ENCODE measurements at regions of chr20 and their contacts with region 1.

Region 1: DNA sequence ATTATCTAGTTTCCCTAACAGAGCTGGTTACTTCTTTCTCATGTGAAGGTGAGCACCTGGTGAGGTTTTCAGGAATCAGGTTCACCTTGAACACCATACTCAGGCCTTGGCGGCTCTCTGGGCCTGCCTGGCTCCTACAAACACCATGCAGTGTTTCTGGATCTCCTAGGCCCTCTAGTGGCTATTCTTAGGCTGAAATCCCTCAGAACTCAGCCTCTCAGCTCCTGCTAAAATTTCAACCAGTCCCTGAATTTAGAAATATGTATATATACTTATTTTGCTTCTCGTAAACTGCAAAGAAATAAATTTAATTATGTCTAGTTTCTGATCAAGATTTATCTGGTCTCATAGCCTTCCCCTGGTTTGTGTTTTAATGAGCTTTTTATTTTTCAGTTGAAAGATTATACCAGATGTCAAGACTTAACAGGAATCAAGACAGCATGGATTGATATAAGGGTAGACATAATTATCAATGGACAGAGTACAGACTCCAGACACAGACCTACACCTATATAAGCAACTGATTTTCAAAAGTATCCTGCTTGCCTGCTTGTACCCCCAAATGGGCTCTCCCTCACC is 55.9 kb downstream of the ANKEF1 start:
- DNase-seq: peak; percentile 50
- H3K4me3 ChIP-seq: no peak overlapping the region; a peak in 1 of 4 replicates
- H3K27ac ChIP-seq: no peak overlapping the region
- H3K4me1 ChIP-seq: peaks cover 4 to 11% of the 10 kb centered on the region in 2 experiments; a peak in 1 of 4 replicates
- H3K27me3 ChIP-seq: no peaks in the 10 kb centered on the region
- CTCF ChIP-seq: peak; percentile 90
- EP300 ChIP-seq: no peak
- RAD21 ChIP-seq: peak; percentile 88

Region 2: GRCh38 chr20:9332783-9333479 is 757.7 kb before region 1 on chr20:
- CTCF ChIA-PET with region 1: no interaction called
- POLR2A ChIA-PET with region 1: no interaction called
- DNase-seq: peak; percentile 9
- H3K4me3 ChIP-seq: no peak overlapping the region
- H3K27ac ChIP-seq: no peak overlapping the region
- H3K4me1 ChIP-seq: peaks cover 0 to 7% of the 10 kb centered on the region in 2 experiments; a peak in 1 of 4 replicates
- H3K27me3 ChIP-seq: no peaks in the 10 kb centered on the region
- CTCF ChIP-seq: no peak
- EP300 ChIP-seq: no peak
- RAD21 ChIP-seq: no peak

Region 3: GRCh38 chr20:9949563-9949962 is 141.1 kb before region 1 on chr20:
- CTCF ChIA-PET with region 1: interaction called, 10 read pairs
- POLR2A ChIA-PET with region 1: no interaction called
- DNase-seq: no peak
- H3K4me3 ChIP-seq: no peak overlapping the region
- H3K27ac ChIP-seq: no peak overlapping the region
- H3K4me1 ChIP-seq: no peaks in the 10 kb centered on the region; a peak in 1 of 4 replicates
- H3K27me3 ChIP-seq: no peaks in the 10 kb centered on the region
- CTCF ChIP-seq: no peak
- EP300 ChIP-seq: no peak
- RAD21 ChIP-seq: no peak

Region 4: GRCh38 chr20:10051185-10051584 is 39.5 kb before region 1 on chr20:
- CTCF ChIA-PET with region 1: interaction called, 14 read pairs
- POLR2A ChIA-PET with region 1: no interaction called
- DNase-seq: no peak
- H3K4me3 ChIP-seq: no peak overlapping the region
- H3K27ac ChIP-seq: no peak overlapping the region
- H3K4me1 ChIP-seq: no peaks in the 10 kb centered on the region
- H3K27me3 ChIP-seq: no peaks in the 10 kb centered on the region
- CTCF ChIP-seq: no peak
- EP300 ChIP-seq: no peak
- RAD21 ChIP-seq: no peak

Region 5: DNA sequence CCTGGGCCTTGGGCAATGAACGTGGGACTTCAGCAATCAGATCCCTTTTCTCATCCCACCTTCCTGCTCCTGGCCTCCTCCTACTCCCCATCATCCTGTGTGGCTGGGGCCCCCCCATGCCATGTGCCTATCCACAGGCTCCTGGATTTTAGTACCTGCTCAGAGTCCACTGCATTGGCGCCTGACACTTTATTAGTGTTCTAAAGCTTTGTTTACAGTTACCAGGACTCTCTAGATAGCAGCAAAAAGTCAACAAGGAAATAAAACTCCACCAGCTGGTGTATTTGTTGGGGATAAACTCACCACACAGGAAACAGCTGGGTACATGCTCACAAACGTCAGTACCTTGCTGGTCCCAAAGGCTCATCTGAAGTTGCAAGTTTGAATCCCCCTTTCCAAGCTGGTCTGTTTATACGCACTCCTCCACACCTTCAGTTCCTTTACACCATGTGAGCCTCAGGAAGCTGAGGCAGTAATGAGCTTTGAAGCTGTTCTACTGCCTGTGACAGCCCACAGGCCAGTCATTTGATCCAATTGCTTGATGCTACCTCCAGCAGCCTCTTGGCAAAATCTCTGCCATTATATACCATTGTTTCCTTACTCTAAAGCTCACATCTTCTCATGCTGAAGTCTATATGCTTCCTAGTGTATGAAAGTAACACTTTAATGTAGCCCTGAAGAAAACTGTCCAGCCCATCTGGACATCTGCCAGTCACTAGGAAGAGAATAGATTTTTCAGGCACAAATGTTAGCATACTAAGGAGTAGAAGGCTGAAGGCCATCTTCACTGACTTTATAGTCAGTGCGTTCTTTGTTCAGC is 20.7 kb after region 1 on chr20:
- CTCF ChIA-PET with region 1: interaction called, 24 read pairs
- POLR2A ChIA-PET with region 1: no interaction called
- DNase-seq: no peak
- H3K4me3 ChIP-seq: no peak overlapping the region
- H3K27ac ChIP-seq: no peak overlapping the region
- H3K4me1 ChIP-seq: no peaks in the 10 kb centered on the region; a peak in 1 of 4 replicates
- H3K27me3 ChIP-seq: no peaks in the 10 kb centered on the region
- CTCF ChIP-seq: no peak
- EP300 ChIP-seq: no peak
- RAD21 ChIP-seq: no peak

Region 6: DNA sequence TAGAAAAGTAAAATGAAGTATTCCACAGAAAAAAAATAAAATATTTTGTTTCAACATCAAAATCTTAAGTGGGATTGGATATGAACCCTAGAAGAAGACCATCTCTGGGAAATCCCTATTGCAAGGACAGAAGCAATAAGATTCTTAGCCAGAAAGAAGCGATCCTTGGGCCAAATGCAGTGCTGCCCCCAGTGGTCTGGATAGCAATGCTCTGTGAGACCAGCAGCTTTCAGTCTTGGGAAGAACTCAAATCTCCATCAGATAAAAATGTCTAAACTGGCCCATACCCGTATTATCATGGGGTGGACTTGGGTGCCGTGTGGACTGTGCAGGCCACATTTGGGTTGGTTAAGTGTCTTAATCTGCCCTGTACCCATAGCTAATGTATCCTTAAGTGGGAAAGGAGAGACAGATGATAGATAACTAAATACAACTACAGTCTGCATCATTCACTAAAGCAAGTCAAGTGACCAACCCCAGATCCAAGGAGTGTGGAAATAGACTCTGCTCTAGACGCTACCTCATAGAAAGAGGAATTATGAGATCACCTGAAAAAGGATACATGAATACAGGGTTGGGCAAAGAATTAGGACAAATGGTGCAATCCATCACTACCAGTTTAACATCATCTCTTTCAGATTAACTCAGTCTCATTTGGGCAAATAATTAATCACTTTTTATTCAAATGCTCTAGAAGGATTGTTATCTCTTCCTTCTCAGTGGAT is 89.1 kb after region 1 on chr20:
- CTCF ChIA-PET with region 1: interaction called, 11 read pairs
- POLR2A ChIA-PET with region 1: no interaction called
- DNase-seq: peak; percentile 22
- H3K4me3 ChIP-seq: no peak overlapping the region; a peak in 1 of 4 replicates
- H3K27ac ChIP-seq: no peak overlapping the region
- H3K4me1 ChIP-seq: peaks cover 0 to 5% of the 10 kb centered on the region in 2 experiments; a peak in 1 of 4 replicates
- H3K27me3 ChIP-seq: no peaks in the 10 kb centered on the region
- CTCF ChIP-seq: peak; percentile 63
- EP300 ChIP-seq: no peak
- RAD21 ChIP-seq: peak; percentile 52

Region 7: DNA sequence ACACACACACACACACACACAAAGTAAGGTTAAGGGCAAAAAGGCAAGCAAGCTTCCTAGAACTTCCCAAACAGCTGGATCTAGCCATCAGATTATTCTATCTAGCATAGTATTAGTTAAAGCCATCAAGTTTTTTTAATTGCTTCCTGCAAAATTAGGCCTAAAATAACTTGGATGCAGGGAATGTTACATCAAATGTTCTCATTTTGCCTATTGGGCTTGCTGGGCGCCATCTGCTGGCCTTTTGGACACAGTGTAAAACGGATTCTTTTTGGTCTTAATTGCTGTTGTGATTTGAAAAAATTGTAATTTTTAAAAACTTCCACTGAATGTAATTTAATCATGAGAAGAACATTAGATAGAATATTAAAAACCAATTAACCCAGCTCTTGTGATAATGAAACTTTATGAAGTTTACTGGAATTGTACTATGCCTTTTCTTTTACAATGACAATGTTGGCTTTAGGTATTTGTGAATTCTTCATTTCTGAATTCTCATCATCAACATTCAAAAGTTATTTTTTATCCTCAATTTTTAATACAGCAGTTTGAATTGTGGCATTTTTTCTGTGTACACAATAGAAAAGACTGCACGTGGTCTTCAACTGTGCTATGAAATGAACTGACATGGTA is 336.5 kb after region 1 on chr20:
- CTCF ChIA-PET with region 1: interaction called, 35 read pairs
- POLR2A ChIA-PET with region 1: no interaction called
- DNase-seq: peak; percentile 51
- H3K4me3 ChIP-seq: no peak overlapping the region; a peak in 1 of 4 replicates
- H3K27ac ChIP-seq: no peak overlapping the region
- H3K4me1 ChIP-seq: peaks cover 5 to 8% of the 10 kb centered on the region in 2 experiments; a peak in 3 of 4 replicates
- H3K27me3 ChIP-seq: no peaks in the 10 kb centered on the region
- CTCF ChIP-seq: peak; percentile 98
- EP300 ChIP-seq: no peak
- RAD21 ChIP-seq: peak; percentile 80